Ovary (tissue), 10 donors: ENCODE measurements at regions of chr3 and their contacts with region 1.

Region 1: GRCh38 chr3:184275961-184276910 is at the start of gene ECE2:
- DNase-seq: no peak
- H3K4me3 ChIP-seq: no peak within 1 kb of the TSS
- H3K27ac ChIP-seq: no peak within 1 kb of the TSS
- H3K4me1 ChIP-seq: no peaks in the 10 kb centered on the region
- H3K27me3 ChIP-seq: no peaks in the 10 kb centered on the region
- CTCF ChIP-seq: no peak
- EP300 ChIP-seq: no peak
- POLR2A ChIP-seq: no peak
- total RNA-seq, gene ECE2: not detected

Region 2: GRCh38 chr3:183794452-183794851 is 481.8 kb before region 1 on chr3:
- intact Hi-C with region 1: loop called in 1 of 4 experiments (anchors 5 kb)
- DNase-seq: no peak
- H3K4me3 ChIP-seq: no peak overlapping the region
- H3K27ac ChIP-seq: no peak overlapping the region
- H3K4me1 ChIP-seq: no peaks in the 10 kb centered on the region
- H3K27me3 ChIP-seq: no peaks in the 10 kb centered on the region
- CTCF ChIP-seq: no peak
- EP300 ChIP-seq: no peak
- POLR2A ChIP-seq: no peak

Region 3: DNA sequence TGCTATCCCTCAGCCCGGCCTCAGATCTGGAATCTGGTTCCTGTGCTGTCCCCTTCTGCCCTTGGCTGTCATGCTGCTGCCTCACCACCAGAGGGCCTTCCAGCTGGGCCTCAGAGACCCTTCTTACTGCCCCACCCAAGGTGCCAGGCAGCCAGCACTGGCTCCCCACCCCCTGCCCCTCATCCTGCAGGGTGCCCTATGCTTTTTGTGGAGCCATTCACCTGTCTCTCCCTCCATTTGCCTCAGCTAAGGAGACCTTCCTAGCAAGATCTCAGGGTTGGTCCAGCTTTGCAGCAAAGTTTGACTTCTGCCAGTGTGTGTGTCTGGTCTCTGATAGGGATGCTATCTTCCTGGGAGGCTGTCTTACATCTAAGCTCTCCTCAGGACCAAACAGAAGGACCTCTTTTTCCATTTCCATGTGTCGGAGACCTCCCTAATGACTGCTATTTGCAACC is 48.7 kb before region 1 on chr3:
- intact Hi-C with region 1: no loop called
- DNase-seq: no peak
- H3K4me3 ChIP-seq: no peak overlapping the region
- H3K27ac ChIP-seq: no peak overlapping the region
- H3K4me1 ChIP-seq: peaks cover 6% of the 10 kb centered on the region
- H3K27me3 ChIP-seq: no peaks in the 10 kb centered on the region
- CTCF ChIP-seq: no peak
- EP300 ChIP-seq: no peak
- POLR2A ChIP-seq: no peak

Region 4: GRCh38 chr3:184503647-184504046 is 227.4 kb after region 1 on chr3:
- intact Hi-C with region 1: no loop called
- DNase-seq: no peak
- H3K4me3 ChIP-seq: no peak overlapping the region
- H3K27ac ChIP-seq: no peak overlapping the region
- H3K4me1 ChIP-seq: no peaks in the 10 kb centered on the region
- H3K27me3 ChIP-seq: no peaks in the 10 kb centered on the region
- CTCF ChIP-seq: no peak
- EP300 ChIP-seq: no peak
- POLR2A ChIP-seq: no peak